ENCODE measurements at regions of chr7 and their contacts with region 1.

Region 1: GRCh38 chr7:87312215-87312865 is 33.1 kb upstream of the CROT start:
- DNase-seq: peak; percentile 71
- H3K4me3 Mint-ChIP-seq: no peak overlapping the region
- H3K27ac Mint-ChIP-seq: no peak overlapping the region
- H3K4me1 Mint-ChIP-seq: peaks cover 13% of the 10 kb centered on the region
- H3K27me3 Mint-ChIP-seq: peaks cover 18% of the 10 kb centered on the region
- CTCF ChIP-seq: peak; percentile 97

Region 2: DNA sequence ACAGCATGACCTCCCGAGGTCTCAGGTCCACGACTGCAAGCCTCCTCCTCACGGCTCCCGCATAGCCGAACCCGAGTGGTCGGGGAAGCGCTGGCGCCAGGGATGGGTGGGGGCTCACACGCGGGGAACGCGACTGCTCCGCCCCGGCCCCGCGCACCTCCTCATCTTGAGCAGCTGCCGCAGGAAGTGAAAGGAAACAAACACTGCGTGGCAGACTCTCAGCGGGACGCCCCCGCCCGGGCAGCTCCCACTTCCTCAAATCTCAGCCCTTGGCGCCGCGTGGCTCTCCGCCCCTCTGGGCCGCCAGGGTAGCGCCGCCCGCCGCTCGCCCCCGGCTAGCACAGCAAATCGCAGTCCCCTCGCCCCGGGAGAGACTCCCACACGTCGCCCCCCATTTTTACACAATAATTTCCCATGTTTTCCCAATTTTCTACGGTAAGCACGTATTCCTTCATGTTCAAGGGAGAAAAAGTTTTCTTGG is 92.8 kb before region 1 on chr7 and contains the start of gene TMEM243:
- CTCF ChIA-PET with region 1: no interaction called
- POLR2A ChIA-PET with region 1: interaction called, 31 read pairs
- intact Hi-C with region 1: no loop called
- DNase-seq: peak; percentile 56
- H3K4me3 Mint-ChIP-seq: peak within 1 kb of the TSS; percentile 98
- H3K27ac Mint-ChIP-seq: peak within 1 kb of the TSS; percentile 86
- H3K4me1 Mint-ChIP-seq: peaks cover 26% of the 10 kb centered on the region
- H3K27me3 Mint-ChIP-seq: no peaks in the 10 kb centered on the region
- CTCF ChIP-seq: no peak
- total RNA-seq, gene TMEM243: 19.9 and 23.0 TPM in 2 replicates

Region 3: DNA sequence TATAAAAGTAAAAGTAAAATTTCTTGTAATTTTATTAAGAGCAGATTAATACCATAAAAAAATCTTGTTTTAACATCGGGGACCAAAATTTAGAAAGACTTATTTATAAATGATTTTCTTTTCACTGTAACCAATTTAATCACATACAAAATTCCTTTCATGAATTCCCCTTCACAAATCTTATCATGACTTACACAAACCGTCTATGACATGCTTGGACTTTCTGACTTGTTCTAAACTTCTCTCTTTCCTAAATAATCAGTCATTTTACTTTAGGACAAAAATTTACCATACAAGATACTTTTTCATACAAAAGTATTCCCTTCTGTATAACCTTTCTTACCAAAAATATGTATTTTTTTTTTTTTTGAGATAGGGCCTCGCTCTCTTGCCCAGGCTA is 42.4 kb after region 1 on chr7:
- CTCF ChIA-PET with region 1: interaction called, 6 read pairs
- POLR2A ChIA-PET with region 1: interaction called, 45 read pairs
- intact Hi-C with region 1: loop called (anchors 5 kb)
- DNase-seq: peak; percentile 45
- H3K4me3 Mint-ChIP-seq: no peak overlapping the region
- H3K27ac Mint-ChIP-seq: no peak overlapping the region
- H3K4me1 Mint-ChIP-seq: peaks cover 14% of the 10 kb centered on the region
- H3K27me3 Mint-ChIP-seq: no peaks in the 10 kb centered on the region
- CTCF ChIP-seq: no peak

Region 4: DNA sequence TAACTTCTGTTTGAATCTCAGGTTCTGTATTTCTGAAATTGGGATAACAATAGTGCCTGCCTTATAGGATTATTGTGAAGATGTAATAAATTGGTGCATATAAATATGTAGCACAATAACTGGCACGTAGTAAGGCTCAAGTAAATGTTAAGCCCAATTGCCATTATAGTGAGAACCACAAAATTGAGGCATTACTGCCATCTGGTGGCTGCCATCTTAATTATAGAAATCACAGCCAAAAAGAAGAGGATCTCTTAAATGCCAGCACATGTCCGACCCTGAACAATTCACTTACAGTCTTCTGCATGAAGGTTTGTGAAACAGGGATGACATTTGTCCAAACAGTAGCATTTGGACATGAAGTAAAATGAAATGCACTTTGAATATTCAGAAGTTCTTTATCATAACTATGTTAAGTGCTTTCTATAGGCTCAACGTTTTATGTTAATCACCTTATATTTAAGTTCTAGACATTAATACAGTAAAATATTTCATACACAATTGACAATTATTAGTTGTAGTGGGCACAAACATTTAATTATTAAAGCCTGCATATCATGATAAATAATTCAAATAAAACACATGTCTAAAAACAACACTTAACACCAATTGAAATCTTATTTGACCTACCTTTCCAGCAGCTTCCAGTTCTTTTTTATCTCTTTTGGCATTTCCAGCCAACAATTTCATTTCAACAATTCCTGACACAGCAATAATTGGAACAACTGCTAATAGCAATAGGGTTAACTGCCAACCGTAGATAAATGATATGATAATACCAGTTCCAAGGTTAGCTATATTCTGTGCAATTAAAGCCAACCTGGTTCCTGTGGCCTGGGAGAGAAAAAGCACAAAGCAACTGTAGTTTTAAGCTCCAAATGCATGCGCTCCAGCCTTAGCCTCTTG is 104.6 kb after region 1 on chr7:
- CTCF ChIA-PET with region 1: interaction called, 494 read pairs
- POLR2A ChIA-PET with region 1: interaction called, 50 read pairs
- intact Hi-C with region 1: loop called (anchors 1 kb)
- DNase-seq: peak; percentile 71
- H3K4me3 Mint-ChIP-seq: no peak overlapping the region
- H3K27ac Mint-ChIP-seq: no peak overlapping the region
- H3K4me1 Mint-ChIP-seq: no peaks in the 10 kb centered on the region
- H3K27me3 Mint-ChIP-seq: peaks cover 10% of the 10 kb centered on the region
- CTCF ChIP-seq: peak; percentile 59

Region 5: GRCh38 chr7:87797798-87798403 is 485.6 kb after region 1 on chr7:
- CTCF ChIA-PET with region 1: no interaction called
- POLR2A ChIA-PET with region 1: no interaction called
- intact Hi-C with region 1: loop called (anchors 5 kb)
- DNase-seq: peak; percentile 71
- H3K4me3 Mint-ChIP-seq: no peak overlapping the region
- H3K27ac Mint-ChIP-seq: no peak overlapping the region
- H3K4me1 Mint-ChIP-seq: no peaks in the 10 kb centered on the region
- H3K27me3 Mint-ChIP-seq: peaks cover 2% of the 10 kb centered on the region
- CTCF ChIP-seq: peak; percentile 54